ENCODE measurements at regions of chr4 and their contacts with region 1.

Region 1: DNA sequence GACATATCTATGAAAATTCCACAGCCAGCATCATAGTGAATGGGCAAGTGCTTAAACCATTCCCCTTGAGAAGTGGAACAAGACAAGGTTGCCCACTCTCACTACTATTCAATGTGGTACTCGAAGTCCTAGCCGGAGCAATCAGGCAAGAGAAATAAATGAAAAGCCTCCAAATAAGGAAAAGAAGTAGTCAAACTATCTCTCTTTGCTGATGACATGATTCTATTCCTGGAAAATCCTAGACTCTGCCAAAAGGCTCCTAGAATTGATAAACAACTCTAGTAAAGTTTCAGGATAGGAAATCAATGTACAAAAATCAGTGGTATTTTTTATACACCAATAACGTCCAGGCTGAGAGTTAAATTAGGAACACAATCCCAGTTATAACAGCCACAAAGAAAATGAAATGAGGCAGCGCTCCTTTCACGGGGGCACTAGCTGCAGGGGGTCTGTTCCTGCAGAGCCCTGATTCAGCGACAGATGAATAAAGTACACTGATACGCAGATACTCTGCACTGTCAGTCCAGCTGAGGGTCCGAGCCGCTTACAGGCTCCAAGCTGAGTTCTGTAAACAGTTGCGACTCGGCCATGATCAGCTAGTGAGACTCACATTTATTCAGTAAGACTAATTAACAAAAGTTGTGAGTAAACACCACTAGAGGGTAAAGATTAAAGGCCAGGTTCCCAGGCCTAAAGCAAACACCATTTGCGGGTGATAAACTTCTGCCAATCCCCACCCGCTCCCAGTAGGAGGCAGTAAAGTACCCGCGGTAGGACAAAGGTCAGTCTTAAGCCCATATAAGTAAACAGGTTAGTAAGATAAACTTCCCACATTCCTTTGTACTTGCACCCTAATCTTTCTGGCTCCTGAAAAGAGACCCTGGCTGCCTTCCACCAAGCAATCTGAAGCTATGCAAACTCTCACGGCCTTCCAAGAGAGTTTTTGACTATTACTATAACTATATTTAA is 290.6 kb upstream of the GRID2 start:
- DNase-seq: no peak
- H3K4me3 ChIP-seq: no peak overlapping the region
- H3K27ac ChIP-seq: no peak overlapping the region
- H3K4me1 ChIP-seq: no peaks in the 10 kb centered on the region
- H3K27me3 ChIP-seq: no peaks in the 10 kb centered on the region
- CTCF ChIP-seq: no peak
- POLR2A ChIP-seq: no peak

Region 2: GRCh38 chr4:90624781-90625180 is 1388.4 kb before region 1 on chr4:
- intact Hi-C with region 1: no loop called
- DNase-seq: no peak
- H3K4me3 ChIP-seq: no peak overlapping the region
- H3K27ac ChIP-seq: no peak overlapping the region
- H3K4me1 ChIP-seq: no peaks in the 10 kb centered on the region
- H3K27me3 ChIP-seq: no peaks in the 10 kb centered on the region
- CTCF ChIP-seq: no peak
- POLR2A ChIP-seq: no peak

Region 3: GRCh38 chr4:91973479-91974153 is 39.6 kb before region 1 on chr4:
- intact Hi-C with region 1: loop called (anchors 5 kb)
- DNase-seq: no peak
- H3K4me3 ChIP-seq: no peak overlapping the region
- H3K27ac ChIP-seq: no peak overlapping the region
- H3K4me1 ChIP-seq: no peaks in the 10 kb centered on the region
- H3K27me3 ChIP-seq: no peaks in the 10 kb centered on the region
- CTCF ChIP-seq: no peak
- POLR2A ChIP-seq: no peak

Region 4: GRCh38 chr4:92506933-92507332 is 493.8 kb after region 1 on chr4:
- intact Hi-C with region 1: no loop called
- DNase-seq: no peak
- H3K4me3 ChIP-seq: no peak overlapping the region
- H3K27ac ChIP-seq: no peak overlapping the region
- H3K4me1 ChIP-seq: no peaks in the 10 kb centered on the region
- H3K27me3 ChIP-seq: no peaks in the 10 kb centered on the region
- CTCF ChIP-seq: no peak
- POLR2A ChIP-seq: no peak

Measured in breast epithelium (tissue), 4 donors.